AG04449 (cell line): ENCODE measurements at regions of chr3 and their contacts with region 1.

Region 1: GRCh38 chr3:102229062-102229655 is 205.7 kb upstream of the ZPLD1 start:
- DNase-seq: no peak
- H3K4me3 ChIP-seq: no peak overlapping the region
- CTCF ChIP-seq: peak; percentile 83

Region 2: GRCh38 chr3:101744735-101745134 is 484.4 kb before region 1 on chr3:
- CTCF ChIA-PET with region 1: no interaction called
- POLR2A ChIA-PET with region 1: no interaction called
- DNase-seq: no peak
- H3K4me3 ChIP-seq: no peak overlapping the region
- CTCF ChIP-seq: no peak

Region 3: GRCh38 chr3:101779047-101779821 is 449.9 kb before region 1 on chr3 and contains the start of gene NXPE3:
- CTCF ChIA-PET with region 1: interaction called, 13 read pairs
- POLR2A ChIA-PET with region 1: no interaction called
- DNase-seq: peak; percentile 14
- H3K4me3 ChIP-seq: peak within 1 kb of the TSS; percentile 93
- CTCF ChIP-seq: no peak

Region 4: DNA sequence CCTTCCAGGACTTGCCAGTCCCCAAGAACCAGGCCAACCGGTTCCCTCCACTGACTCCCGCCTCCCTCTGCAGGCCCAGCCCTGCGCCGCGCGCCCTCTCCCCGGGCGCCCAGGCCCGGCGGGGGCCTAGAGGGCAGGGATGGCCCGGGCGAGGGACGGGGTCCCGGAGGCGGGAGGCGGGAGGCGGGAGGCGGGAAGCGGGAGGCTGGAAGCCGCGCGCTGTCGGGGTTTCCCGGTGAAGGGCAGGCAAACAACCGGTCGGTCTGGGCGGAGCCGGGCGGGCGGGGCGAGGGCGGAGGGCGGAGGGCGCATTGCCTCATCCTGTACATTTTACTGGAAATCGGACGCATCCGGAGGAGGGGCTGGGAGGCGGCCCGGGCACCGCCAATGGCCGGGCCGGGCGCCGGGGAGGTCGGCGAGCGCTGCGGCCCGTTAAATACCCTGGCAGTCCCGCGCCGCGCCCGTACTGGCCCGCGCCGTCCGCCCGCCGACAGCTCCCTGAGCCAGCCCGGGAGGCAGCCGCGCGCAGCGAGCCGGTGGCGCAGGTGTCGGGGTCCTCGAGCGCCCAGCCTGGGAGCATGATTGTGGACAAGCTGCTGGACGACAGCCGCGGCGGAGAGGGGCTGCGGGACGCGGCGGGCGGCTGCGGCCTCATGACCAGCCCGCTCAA is 380.0 kb before region 1 on chr3 and contains the start of gene NFKBIZ:
- CTCF ChIA-PET with region 1: interaction called, 42 read pairs
- POLR2A ChIA-PET with region 1: interaction called, 40 read pairs
- DNase-seq: no peak
- H3K4me3 ChIP-seq: peak within 1 kb of the TSS; percentile 79
- CTCF ChIP-seq: no peak

Region 5: GRCh38 chr3:101879111-101879510 is 350.0 kb before region 1 on chr3:
- CTCF ChIA-PET with region 1: interaction called, 13 read pairs
- POLR2A ChIA-PET with region 1: no interaction called
- DNase-seq: no peak
- H3K4me3 ChIP-seq: no peak overlapping the region
- CTCF ChIP-seq: no peak

Region 6: GRCh38 chr3:102113411-102114041 is 115.6 kb before region 1 on chr3:
- CTCF ChIA-PET with region 1: no interaction called
- POLR2A ChIA-PET with region 1: no interaction called
- DNase-seq: no peak
- H3K4me3 ChIP-seq: no peak overlapping the region
- CTCF ChIP-seq: no peak

Region 7: DNA sequence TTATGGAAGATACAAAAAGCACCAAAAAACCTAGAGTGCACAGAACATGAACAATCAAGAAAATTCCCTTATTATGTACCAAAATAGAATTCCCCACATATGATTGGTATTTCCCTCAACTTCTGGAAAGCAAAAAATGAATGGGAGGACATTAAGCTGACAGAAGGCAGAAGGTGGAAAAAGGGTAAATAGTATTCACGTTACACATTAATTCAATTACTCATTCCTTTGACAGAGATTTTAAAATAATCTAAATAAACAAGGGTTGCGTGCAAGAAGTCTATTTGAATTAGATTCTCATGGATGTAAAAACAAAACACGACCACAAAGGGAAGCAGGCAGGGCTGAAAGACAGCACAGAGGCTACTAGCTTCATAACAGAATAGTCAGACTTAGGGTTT is 54.8 kb before region 1 on chr3:
- CTCF ChIA-PET with region 1: interaction called, 14 read pairs
- POLR2A ChIA-PET with region 1: no interaction called
- DNase-seq: no peak
- H3K4me3 ChIP-seq: no peak overlapping the region
- CTCF ChIP-seq: no peak

Region 8: DNA sequence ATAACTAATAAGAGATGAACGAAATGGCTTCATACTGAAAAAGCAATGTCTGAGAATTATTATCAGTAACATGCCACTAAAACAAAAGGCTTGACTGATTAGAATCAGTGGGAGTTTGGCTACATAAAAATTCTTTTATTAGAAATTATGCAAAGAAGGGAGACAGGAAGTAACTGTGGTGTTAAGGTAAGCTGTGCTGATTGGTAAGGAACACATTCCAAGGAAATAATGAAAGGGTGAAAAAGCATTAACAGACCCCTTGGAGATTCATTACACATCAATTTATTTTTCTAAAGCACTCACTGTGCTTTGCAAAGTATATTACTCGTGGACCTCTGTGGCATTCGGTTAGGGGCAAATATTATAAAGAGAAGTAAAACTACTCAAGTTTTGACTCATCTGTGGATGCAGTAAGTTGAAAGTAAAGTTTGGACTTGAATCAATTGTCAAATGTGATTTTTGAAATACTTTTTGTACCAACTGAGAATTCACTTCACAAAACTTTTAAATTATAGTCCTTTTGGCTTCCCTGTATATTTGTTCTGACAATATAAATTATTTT is 29.6 kb after region 1 on chr3:
- CTCF ChIA-PET with region 1: interaction called, 11 read pairs
- POLR2A ChIA-PET with region 1: no interaction called
- DNase-seq: no peak
- H3K4me3 ChIP-seq: no peak overlapping the region
- CTCF ChIP-seq: no peak

Region 9: GRCh38 chr3:102673271-102674115 is 444.3 kb after region 1 on chr3:
- CTCF ChIA-PET with region 1: interaction called, 11 read pairs
- POLR2A ChIA-PET with region 1: no interaction called
- DNase-seq: no peak
- H3K4me3 ChIP-seq: no peak overlapping the region
- CTCF ChIP-seq: peak; percentile 75